Aorta (tissue), 5 donors: ENCODE measurements at regions of chrX and their contacts with region 1.

Region 1: GRCh38 chrX:55169782-55170181 is 50.4 kb upstream of the PAGE5 start:
- DNase-seq: no peak
- ATAC-seq: no peak
- H3K4me3 ChIP-seq: no peak overlapping the region
- H3K27ac ChIP-seq: no peak overlapping the region
- H3K4me1 ChIP-seq: no peaks in the 10 kb centered on the region
- H3K27me3 ChIP-seq: no peaks in the 10 kb centered on the region

Region 2: GRCh38 chrX:55240788-55241340 is 71.1 kb after region 1 on chrX:
- intact Hi-C with region 1: loop called in 1 of 2 experiments (anchors 10 kb)
- DNase-seq: no peak
- ATAC-seq: no peak
- H3K4me3 ChIP-seq: no peak overlapping the region
- H3K27ac ChIP-seq: no peak overlapping the region
- H3K4me1 ChIP-seq: no peaks in the 10 kb centered on the region
- H3K27me3 ChIP-seq: no peaks in the 10 kb centered on the region